ENCODE measurements at regions of chr1 and their contacts with region 1.

Region 1: DNA sequence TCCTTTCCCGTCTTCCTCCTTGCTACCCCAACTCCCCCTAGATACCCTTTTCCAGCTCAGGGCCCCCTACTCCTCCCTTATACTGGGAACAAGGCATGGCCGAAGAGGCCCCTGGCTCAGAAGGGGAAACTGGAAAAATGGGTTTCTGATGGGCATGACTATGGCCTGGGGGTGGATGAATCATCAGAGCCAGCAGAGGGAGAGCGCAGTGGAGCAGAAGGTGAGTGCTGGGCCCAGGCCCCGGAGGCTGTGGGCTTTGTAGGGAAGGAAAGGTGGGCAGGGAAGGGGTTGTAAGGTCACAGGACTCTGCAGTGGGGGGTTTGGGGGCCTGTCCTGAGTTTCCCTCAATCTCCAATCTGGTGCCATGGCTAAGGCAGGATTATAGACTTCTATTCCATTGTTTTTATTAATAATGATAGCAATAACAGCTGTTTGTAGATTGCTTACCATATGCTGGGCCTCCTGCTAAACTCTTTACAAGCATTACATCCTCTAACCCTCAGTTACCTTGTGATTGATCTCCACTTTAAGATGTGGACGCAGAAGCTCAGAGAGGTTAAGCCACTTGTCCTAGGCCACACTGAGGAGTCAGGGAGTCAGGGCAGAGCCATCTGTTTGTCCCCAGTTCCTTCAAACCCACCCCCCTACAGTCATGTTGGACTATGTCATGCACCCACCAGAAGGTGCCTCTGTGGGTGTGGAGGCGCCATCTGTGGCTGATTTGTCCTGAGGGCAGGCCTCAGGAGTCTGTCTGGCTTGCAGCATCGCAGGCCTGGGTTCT is 36.2 kb upstream of the ZNF362 start:
- DNase-seq: no peak
- ATAC-seq: no peak
- H3K4me3 ChIP-seq: no peak overlapping the region
- H3K27ac ChIP-seq: no peak overlapping the region
- H3K4me1 ChIP-seq: no peaks in the 10 kb centered on the region
- H3K27me3 ChIP-seq: no peaks in the 10 kb centered on the region

Region 2: DNA sequence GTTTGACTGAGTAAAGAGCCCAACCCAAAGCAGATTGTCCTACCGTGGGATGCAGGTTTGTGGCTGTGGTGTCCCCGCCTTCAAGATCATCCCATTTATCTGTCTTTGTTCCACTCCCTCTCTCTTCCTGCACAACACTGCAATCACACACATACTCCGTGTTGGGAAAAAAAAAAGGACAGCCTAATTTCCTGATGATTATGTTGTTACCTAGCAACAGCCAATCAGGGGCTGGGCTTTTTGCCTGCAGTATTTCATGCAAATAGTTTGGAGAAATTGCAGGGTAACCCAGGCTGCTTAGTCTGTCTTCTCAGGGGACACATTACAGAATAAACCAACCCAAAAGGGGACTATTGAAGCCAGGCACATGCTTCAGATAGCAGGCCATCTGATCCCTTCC is 172.6 kb after region 1 on chr1:
- intact Hi-C with region 1: no loop called
- DNase-seq: no peak
- ATAC-seq: no peak
- H3K4me3 ChIP-seq: no peak overlapping the region
- H3K27ac ChIP-seq: no peak overlapping the region
- H3K4me1 ChIP-seq: peaks cover 0 to 2% of the 10 kb centered on the region in 2 donors
- H3K27me3 ChIP-seq: no peaks in the 10 kb centered on the region

Region 3: GRCh38 chr1:33455539-33456501 is 235.7 kb after region 1 on chr1:
- intact Hi-C with region 1: loop called in 1 of 2 experiments (anchors 5 kb)
- DNase-seq: peak in 1 of 2 donors; percentile 63
- ATAC-seq: peak; percentile 73
- H3K4me3 ChIP-seq: no peak overlapping the region
- H3K27ac ChIP-seq: peak overlapping the region in 1 of 2 donors; percentile 69
- H3K4me1 ChIP-seq: peaks cover 4 to 5% of the 10 kb centered on the region in 2 donors
- H3K27me3 ChIP-seq: no peaks in the 10 kb centered on the region

Measured in aorta (tissue), 5 donors.